ENCODE measurements at regions of chr4 and their contacts with region 1.

Region 1: GRCh38 chr4:24578364-24578763 is 6.0 kb downstream of the DHX15 start:
- DNase-seq: no peak
- H3K4me3 ChIP-seq: no peak overlapping the region
- H3K4me3 Mint-ChIP-seq: peak overlapping the region in 7 of 8 donors; percentile 3 to 64 (median 54)
- H3K27ac ChIP-seq: no peak overlapping the region
- H3K27ac Mint-ChIP-seq: peak overlapping the region; percentile 2 to 75 (median 50)
- H3K4me1 ChIP-seq: peaks cover 78% of the 10 kb centered on the region
- H3K4me1 Mint-ChIP-seq: peaks cover 64 to 91% (median 78%) of the 10 kb centered on the region in 4 donors
- H3K27me3 ChIP-seq: no peaks in the 10 kb centered on the region
- H3K27me3 Mint-ChIP-seq: no peaks in the 10 kb centered on the region

Region 2: DNA sequence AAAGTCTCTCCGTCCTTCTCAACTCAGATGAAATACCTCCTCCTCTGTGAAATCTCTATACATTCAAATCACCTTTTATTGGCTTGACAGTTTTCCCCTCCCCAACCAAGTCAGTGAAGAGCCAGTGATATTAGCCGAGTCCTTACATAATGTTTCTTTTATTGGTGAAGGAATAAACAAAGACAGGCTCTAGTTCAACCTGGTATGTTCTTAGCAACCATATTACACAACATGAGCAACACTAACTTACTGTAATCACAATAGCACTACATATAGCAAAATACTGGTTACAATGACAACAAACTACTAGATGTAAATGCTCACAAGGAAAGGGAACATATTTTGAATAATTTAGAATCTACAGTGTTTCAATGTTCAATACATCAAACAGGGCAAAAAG is 13.9 kb before region 1 on chr4:
- CTCF ChIA-PET with region 1: interaction called, 3 read pairs
- POLR2A ChIA-PET with region 1: no interaction called
- intact Hi-C with region 1: loop called (anchors 2 kb)
- DNase-seq: no peak
- H3K4me3 ChIP-seq: no peak overlapping the region
- H3K4me3 Mint-ChIP-seq: peak overlapping the region in 2 of 8 donors; percentile 17 to 47
- H3K27ac ChIP-seq: no peak overlapping the region
- H3K27ac Mint-ChIP-seq: peak overlapping the region in 6 of 7 donors; percentile 1 to 52 (median 16)
- H3K4me1 ChIP-seq: peaks cover 56% of the 10 kb centered on the region
- H3K4me1 Mint-ChIP-seq: peaks cover 51 to 88% (median 66%) of the 10 kb centered on the region in 4 donors
- H3K27me3 ChIP-seq: no peaks in the 10 kb centered on the region
- H3K27me3 Mint-ChIP-seq: no peaks in the 10 kb centered on the region